ENCODE measurements at regions of chr19 and their contacts with region 1.

Region 1: GRCh38 chr19:35648017-35648961 is at the start of gene COX6B1:
- DNase-seq: peak; percentile 80 to 98 (median 86)
- ATAC-seq: peak; percentile 74
- H3K4me3 ChIP-seq: peak within 1 kb of the TSS; percentile 82
- H3K4me3 Mint-ChIP-seq: peak within 1 kb of the TSS; percentile 99
- H3K27ac ChIP-seq: peak within 1 kb of the TSS; percentile 42 to 63
- H3K27ac Mint-ChIP-seq: peak within 1 kb of the TSS; percentile 99
- H3K4me1 ChIP-seq: peaks cover 60% of the 10 kb centered on the region
- H3K4me1 Mint-ChIP-seq: peaks cover 53% of the 10 kb centered on the region
- H3K27me3 ChIP-seq: no peaks in the 10 kb centered on the region
- H3K27me3 Mint-ChIP-seq: no peaks in the 10 kb centered on the region
- CTCF ChIP-seq: no peak
- total RNA-seq, gene COX6B1: 136 to 144 TPM

Region 2: GRCh38 chr19:35612559-35613321 is 35.5 kb before region 1 on chr19 and contains the start of gene HAUS5:
- CTCF ChIA-PET with region 1: interaction called, 3 read pairs
- POLR2A ChIA-PET with region 1: interaction called, 21 read pairs
- intact Hi-C with region 1: loop called (anchors 1 to 2 kb)
- DNase-seq: peak; percentile 89 to 98 (median 95)
- ATAC-seq: peak; percentile 91
- H3K4me3 ChIP-seq: peak within 1 kb of the TSS; percentile 92
- H3K4me3 Mint-ChIP-seq: peak within 1 kb of the TSS; percentile 94
- H3K27ac ChIP-seq: peak within 1 kb of the TSS; percentile 70 to 72
- H3K27ac Mint-ChIP-seq: peak within 1 kb of the TSS; percentile 94
- H3K4me1 ChIP-seq: peaks cover 38% of the 10 kb centered on the region
- H3K4me1 Mint-ChIP-seq: peaks cover 36% of the 10 kb centered on the region
- H3K27me3 ChIP-seq: no peaks in the 10 kb centered on the region
- H3K27me3 Mint-ChIP-seq: no peaks in the 10 kb centered on the region
- CTCF ChIP-seq: no peak
- total RNA-seq, gene HAUS5: 28.4 to 29.9 TPM

Region 3: DNA sequence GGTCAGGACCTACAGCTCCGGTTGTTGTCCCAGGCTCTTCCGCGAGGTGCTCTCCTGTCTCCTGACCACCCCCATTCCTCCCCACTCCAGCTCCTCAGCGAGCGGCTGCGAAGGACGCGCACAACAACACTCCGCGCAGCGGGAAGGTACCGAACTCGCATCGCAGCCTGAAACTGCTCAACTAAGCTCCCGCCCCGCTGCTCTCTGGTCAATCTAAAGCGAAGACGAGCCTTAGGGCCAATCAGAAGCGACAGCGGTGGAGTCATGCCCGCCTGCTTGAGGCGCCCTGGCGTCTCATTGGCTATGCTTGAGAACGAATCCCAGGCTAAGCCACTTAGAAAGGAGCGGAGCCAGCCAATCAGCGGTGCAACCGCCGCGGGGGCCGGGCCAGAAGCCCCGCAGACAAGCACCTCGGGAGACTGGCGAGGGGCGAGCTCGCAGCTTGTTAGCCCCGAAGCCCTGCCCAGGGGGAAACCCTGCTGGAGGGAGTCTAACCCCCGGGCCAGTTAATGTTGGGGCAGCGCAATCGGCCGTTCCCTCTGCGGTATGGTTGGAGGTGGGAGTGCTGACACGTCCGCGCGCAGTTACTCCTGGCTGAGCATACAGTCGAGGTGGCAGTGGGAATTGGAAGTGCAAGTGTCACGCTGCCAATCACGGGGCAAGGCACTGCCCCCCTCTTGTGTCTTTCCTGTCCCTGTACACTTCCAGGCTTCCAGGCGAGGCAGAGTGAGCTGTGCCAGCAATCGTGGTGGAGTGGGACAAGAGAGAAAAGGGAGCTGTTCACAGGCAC is 54.1 kb after region 1 on chr19:
- CTCF ChIA-PET with region 1: no interaction called
- POLR2A ChIA-PET with region 1: interaction called, 9 read pairs
- intact Hi-C with region 1: loop called in 1 of 2 experiments (anchors 5 kb)
- DNase-seq: peak; percentile 83 to 97 (median 89)
- ATAC-seq: peak; percentile 99
- H3K4me3 ChIP-seq: peak overlapping the region; percentile 83
- H3K4me3 Mint-ChIP-seq: peak overlapping the region; percentile 94
- H3K27ac ChIP-seq: no peak overlapping the region
- H3K27ac Mint-ChIP-seq: peak overlapping the region; percentile 70
- H3K4me1 ChIP-seq: peaks cover 19% of the 10 kb centered on the region
- H3K4me1 Mint-ChIP-seq: peaks cover 7% of the 10 kb centered on the region
- H3K27me3 ChIP-seq: no peaks in the 10 kb centered on the region
- H3K27me3 Mint-ChIP-seq: no peaks in the 10 kb centered on the region
- CTCF ChIP-seq: no peak

Region 4: GRCh38 chr19:35748106-35749020 is 100.1 kb after region 1 on chr19 and contains the start of gene LIN37:
- CTCF ChIA-PET with region 1: interaction called, 4 read pairs
- POLR2A ChIA-PET with region 1: interaction called, 17 read pairs
- intact Hi-C with region 1: loop called in 1 of 2 experiments (anchors 5 kb)
- DNase-seq: peak; percentile 95 to 100 (median 98)
- ATAC-seq: peak; percentile 70
- H3K4me3 ChIP-seq: peak within 1 kb of the TSS; percentile 94
- H3K4me3 Mint-ChIP-seq: peak within 1 kb of the TSS; percentile 98
- H3K27ac ChIP-seq: peak within 1 kb of the TSS; percentile 61 to 75
- H3K27ac Mint-ChIP-seq: peak within 1 kb of the TSS; percentile 89
- H3K4me1 ChIP-seq: peaks cover 49% of the 10 kb centered on the region
- H3K4me1 Mint-ChIP-seq: peaks cover 37% of the 10 kb centered on the region
- H3K27me3 ChIP-seq: no peaks in the 10 kb centered on the region
- H3K27me3 Mint-ChIP-seq: no peaks in the 10 kb centered on the region
- CTCF ChIP-seq: no peak
- total RNA-seq, gene LIN37: 4.8 to 6.0 TPM

Measured in CD4-positive, alpha-beta T cell (primary cell).